ENCODE measurements at regions of chr5 and their contacts with region 1.

Region 1: DNA sequence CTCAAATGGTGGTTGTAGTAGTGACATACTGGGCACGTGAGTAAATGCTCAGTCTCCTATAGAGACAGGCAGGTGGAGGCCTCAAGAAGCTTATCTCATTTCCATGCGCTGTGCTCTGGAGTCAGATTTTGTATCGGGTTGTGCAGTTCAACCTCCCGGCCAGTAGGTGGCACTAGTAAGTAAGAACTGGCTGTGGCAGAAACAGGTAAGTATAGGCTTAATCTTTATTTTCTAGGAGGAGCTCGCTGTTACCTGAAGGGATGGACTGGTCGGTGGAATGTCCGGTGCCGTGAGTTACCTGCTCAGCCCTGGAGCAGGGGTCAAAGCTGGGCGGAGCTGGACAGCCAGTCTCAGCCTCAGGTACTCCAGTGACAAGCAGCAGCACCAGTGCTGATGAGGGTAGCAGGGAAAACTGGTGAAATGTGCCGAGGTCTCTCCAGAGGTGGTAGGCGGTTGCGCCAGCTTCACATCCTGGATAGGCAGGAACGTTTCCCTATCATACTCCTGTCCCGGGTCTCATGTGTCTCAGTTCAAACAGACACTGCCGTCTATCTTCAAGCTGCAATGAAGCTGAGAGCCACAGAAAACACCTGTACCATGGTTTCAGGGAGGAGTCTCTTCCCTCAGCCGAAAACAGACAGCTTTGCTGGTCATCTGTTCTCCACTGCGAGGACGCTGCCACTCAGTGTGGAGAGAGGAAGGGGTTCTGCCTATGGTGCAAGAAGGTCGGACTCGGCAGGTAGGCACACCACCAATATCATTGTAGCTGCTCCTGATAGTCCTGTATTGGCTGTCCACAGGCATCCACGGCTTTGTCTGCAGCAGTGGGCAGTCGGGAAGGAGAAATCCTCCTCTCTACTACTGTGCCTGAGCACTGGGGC is 880.3 kb upstream of the SEMA6A start:
- DNase-seq: peak; percentile 66
- H3K4me3 Mint-ChIP-seq: peak overlapping the region; percentile 49
- H3K27ac Mint-ChIP-seq: no peak overlapping the region
- H3K4me1 Mint-ChIP-seq: no peaks in the 10 kb centered on the region
- H3K27me3 Mint-ChIP-seq: peaks cover 2% of the 10 kb centered on the region

Region 2: DNA sequence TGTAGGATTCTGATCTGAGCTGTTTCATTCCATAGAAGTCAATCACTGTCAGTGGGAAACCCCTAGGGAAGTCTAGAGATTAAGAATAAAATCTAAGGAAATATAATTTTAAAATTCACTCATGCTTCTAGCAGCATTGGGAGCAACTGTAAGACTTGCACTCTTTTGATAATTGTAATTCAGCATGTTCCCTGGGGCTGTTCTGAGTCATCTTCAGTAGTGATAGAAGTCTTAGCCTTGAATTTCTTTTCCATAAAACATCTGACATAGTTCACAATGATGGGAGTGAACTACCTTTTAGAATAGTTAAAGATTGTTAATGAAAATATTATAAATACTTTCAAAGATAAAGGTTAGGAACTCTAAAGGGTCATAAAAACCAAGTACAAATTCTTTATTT is 597.5 kb after region 1 on chr5:
- CTCF ChIA-PET with region 1: no interaction called
- intact Hi-C with region 1: no loop called
- DNase-seq: no peak
- H3K4me3 Mint-ChIP-seq: no peak overlapping the region
- H3K27ac Mint-ChIP-seq: no peak overlapping the region
- H3K4me1 Mint-ChIP-seq: no peaks in the 10 kb centered on the region
- H3K27me3 Mint-ChIP-seq: no peaks in the 10 kb centered on the region

Region 3: GRCh38 chr5:118611332-118611945 is 1156.5 kb after region 1 on chr5:
- CTCF ChIA-PET with region 1: no interaction called
- intact Hi-C with region 1: loop called (anchors 2 kb)
- DNase-seq: peak; percentile 6
- H3K4me3 Mint-ChIP-seq: no peak overlapping the region
- H3K27ac Mint-ChIP-seq: no peak overlapping the region
- H3K4me1 Mint-ChIP-seq: no peaks in the 10 kb centered on the region
- H3K27me3 Mint-ChIP-seq: peaks cover 3% of the 10 kb centered on the region

Region 4: DNA sequence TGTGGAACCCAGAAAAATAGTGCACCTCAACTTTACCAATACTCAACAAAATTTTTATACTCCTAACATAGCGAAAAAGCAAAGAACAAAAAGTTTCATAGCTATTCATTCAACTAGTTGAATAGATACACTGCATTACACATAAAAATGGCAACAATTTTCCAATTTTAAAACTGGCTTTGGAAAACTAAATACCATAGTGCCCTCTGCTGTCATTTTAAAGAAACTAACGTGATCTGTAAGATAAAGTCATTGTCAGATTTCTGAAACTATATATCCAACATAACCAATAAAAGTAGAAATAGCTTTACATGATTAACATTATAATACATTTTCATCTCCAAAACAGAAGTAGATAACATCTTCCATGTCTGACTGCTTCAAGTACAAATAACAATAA is 1501.8 kb after region 1 on chr5:
- CTCF ChIA-PET with region 1: interaction called, 5 read pairs
- intact Hi-C with region 1: loop called (anchors 2 kb)
- DNase-seq: no peak
- H3K4me3 Mint-ChIP-seq: no peak overlapping the region
- H3K27ac Mint-ChIP-seq: no peak overlapping the region
- H3K4me1 Mint-ChIP-seq: no peaks in the 10 kb centered on the region
- H3K27me3 Mint-ChIP-seq: no peaks in the 10 kb centered on the region

Region 5: DNA sequence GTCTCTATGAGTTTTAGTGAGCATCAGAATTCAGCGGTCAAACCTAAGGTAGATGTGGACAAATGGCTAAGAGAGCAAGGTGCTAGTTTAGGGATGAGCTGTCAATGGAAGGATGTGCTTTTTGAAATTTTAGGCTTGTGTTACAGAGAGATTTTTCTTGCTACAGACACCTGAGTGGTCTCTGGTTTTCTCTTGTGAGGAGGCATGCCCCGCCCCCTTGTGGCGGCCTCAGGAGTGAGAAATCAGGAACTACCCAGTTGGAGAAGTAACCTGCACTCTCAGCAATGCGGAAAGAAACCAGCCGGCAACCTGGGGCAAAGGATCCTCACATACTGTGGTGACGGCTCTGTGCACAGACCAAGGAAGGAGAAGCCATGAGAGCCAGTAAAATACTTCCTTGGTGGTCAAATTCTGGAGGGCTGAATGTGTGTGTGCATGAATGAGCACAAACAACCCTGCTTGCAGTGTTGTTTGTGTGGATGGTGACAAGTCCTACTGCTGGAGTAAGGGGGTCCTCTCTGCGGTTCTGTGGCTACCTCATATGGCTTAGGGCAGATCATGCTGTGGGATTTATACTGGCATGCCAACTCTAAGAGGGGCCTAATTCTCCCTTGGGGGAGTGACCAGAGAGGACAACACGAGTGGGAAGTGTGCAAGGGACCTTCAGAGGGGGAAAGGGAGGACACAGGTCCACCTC is 1980.6 kb after region 1 on chr5:
- CTCF ChIA-PET with region 1: no interaction called
- intact Hi-C with region 1: loop called (anchors 10 kb)
- DNase-seq: peak; percentile 85
- H3K4me3 Mint-ChIP-seq: no peak overlapping the region
- H3K27ac Mint-ChIP-seq: no peak overlapping the region
- H3K4me1 Mint-ChIP-seq: peaks cover 8% of the 10 kb centered on the region
- H3K27me3 Mint-ChIP-seq: peaks cover 7% of the 10 kb centered on the region